ENCODE measurements at regions of chr1 and their contacts with region 1.

Region 1: DNA sequence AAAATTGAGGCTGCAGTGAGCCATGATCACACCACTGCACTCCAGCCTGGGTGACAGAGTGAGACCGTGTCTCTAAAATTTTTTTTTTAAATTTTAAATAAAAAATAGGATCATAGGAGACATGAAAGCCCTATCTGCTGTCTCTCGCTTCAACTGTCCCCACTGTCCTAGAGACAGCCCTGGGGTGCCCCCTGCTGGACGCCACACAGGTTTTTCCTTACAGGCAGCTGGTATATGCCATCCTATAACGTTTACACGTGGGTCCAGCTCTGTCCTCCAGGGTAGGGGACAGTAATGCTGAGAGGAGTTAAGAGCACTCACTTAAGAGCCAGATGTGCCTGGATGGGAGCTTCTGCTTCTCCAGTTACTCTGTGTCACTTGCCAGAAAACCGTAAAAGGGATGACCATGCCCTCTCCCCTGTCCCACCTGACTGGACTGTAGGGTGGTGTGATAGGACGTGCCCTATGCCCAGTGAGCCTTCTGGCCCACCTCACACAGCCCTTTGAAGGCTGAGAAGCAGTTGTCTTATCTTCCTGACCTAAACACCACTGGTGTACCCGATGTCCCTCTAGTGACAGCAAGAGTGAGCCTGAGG is 8.5 kb downstream of the FBXO2 start:
- DNase-seq: peak; percentile 25 to 64
- ATAC-seq: peak in 1 of 2 donors; percentile 44
- H3K4me3 ChIP-seq: no peak overlapping the region
- H3K27ac ChIP-seq: no peak overlapping the region
- H3K4me1 ChIP-seq: peaks cover 10 to 13% of the 10 kb centered on the region in 2 donors
- H3K27me3 ChIP-seq: peaks cover 13 to 24% (median 18%) of the 10 kb centered on the region in 3 donors
- CTCF ChIP-seq: peak; percentile 41 to 72 (median 60)
- POLR2A ChIP-seq: no peak

Region 2: GRCh38 chr1:11227106-11228077 is 418.4 kb before region 1 on chr1:
- in situ Hi-C with region 1: loop called in 1 of 4 experiments (anchors 25 kb)
- intact Hi-C with region 1: no loop called
- DNase-seq: no peak
- ATAC-seq: no peak
- H3K4me3 ChIP-seq: no peak overlapping the region
- H3K27ac ChIP-seq: no peak overlapping the region
- H3K4me1 ChIP-seq: no peaks in the 10 kb centered on the region
- H3K27me3 ChIP-seq: no peaks in the 10 kb centered on the region
- CTCF ChIP-seq: no peak
- POLR2A ChIP-seq: no peak

Region 3: DNA sequence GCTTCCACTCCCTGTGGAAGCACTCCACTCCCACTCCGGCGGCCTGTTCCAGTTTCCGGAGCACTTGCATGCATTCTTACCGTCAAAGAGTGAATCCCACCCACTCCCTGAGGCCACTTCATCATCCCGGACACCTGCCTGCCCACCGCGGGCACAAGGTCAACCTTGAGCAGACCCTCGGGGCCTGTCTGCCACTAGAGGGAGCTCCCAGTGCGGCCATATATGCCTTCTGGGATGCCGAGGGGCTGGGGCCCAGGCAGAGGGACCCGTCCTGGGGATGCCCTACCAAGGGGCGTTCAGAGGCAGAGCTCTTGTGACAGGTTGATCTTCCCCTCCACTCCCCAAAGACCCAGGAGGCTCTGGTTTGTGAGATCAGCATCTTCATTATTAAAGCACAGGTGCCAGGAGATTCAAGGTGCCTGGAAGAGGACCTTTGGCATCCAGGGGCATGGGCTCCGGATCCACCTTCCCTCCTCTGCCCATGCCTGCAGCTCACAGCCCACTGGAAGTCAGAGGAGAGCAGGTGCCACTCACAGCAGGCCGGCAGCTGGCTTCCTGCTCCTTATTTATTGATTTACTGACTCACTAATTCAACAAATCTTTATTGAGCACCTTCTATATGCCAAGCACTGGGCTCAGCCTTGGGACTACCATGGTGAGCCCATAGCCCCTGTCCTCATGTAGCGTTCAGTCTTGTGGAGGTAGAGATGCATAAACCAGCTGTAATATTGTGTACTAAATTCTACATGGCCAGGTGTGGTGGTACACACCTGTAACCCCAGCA is 325.4 kb before region 1 on chr1:
- in situ Hi-C with region 1: loop called in 2 of 4 experiments (anchors 25 kb)
- intact Hi-C with region 1: no loop called
- DNase-seq: no peak
- ATAC-seq: no peak
- H3K4me3 ChIP-seq: no peak overlapping the region
- H3K27ac ChIP-seq: no peak overlapping the region
- H3K4me1 ChIP-seq: no peaks in the 10 kb centered on the region
- H3K27me3 ChIP-seq: peaks cover 3 to 10% (median 5%) of the 10 kb centered on the region in 3 donors
- CTCF ChIP-seq: peak; percentile 12 to 61 (median 39)
- POLR2A ChIP-seq: no peak

Region 4: GRCh38 chr1:11478571-11479374 is 167.0 kb before region 1 on chr1 and contains the start of gene DISP3:
- in situ Hi-C with region 1: no loop called
- intact Hi-C with region 1: loop called (anchors 2 kb)
- DNase-seq: no peak
- ATAC-seq: no peak
- H3K4me3 ChIP-seq: peak within 1 kb of the TSS; percentile 48 to 60 (median 50)
- H3K27ac ChIP-seq: no peak within 1 kb of the TSS
- H3K4me1 ChIP-seq: peaks cover 6 to 9% of the 10 kb centered on the region in 2 donors
- H3K27me3 ChIP-seq: peaks cover 60 to 68% (median 61%) of the 10 kb centered on the region in 3 donors
- CTCF ChIP-seq: peak in 4 of 5 experiments; percentile 6 to 54 (median 42)
- POLR2A ChIP-seq: peak in 1 of 2 donors; percentile 12
- total RNA-seq, gene DISP3: not detected